ENCODE measurements at regions of chrX and their contacts with region 1.

Region 1: GRCh38 chrX:13360146-13360545 is 40.3 kb upstream of the ATXN3L start:
- DNase-seq: no peak

Region 2: GRCh38 chrX:13398073-13398823 is 38.1 kb after region 1 on chrX:
- intact Hi-C with region 1: loop called (anchors 2 kb)
- DNase-seq: no peak

Region 3: GRCh38 chrX:13473442-13474163 is 113.5 kb after region 1 on chrX:
- intact Hi-C with region 1: loop called (anchors 10 kb)
- DNase-seq: no peak